ENCODE measurements at regions of chr3 and their contacts with region 1.

Region 1: DNA sequence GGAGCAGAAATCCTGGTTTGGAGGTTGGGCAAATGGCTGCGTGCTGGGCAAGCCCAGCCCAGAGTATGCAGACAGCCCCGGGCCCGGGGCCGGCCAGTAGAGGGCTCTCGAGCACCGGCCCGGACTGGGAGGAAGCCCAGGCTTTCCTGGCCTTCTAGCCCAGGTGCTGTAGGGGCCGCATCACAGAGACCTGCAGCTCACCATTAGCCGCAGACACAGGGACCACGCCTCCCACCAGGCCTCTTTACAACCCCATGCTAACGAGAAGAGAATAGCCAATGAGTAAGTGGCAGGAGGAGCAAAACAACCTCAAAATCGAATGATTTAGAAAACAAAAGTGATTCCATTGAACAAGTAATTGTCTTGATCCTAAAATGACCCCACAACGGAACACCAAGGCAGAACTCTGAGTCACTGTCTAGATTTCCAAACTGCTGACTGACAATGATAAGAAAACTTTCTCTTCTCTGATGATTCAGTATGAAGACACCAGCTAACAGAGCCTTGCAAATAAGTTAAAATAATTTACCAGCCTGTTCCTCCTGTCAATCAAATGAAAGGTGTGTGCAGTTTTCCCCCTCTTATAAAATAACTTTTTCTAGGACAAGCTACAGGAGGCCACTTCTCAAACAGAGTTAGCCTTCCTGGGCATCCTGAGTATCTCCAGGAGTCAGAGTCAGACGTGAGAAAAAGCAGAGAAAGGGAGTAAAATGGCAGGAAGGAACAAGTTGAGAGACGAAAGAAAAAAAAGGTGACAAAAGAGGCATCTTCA is 102.2 kb downstream of the DGKG start:
- DNase-seq: peak; percentile 77 to 87
- ATAC-seq: peak; percentile 88
- H3K4me3 ChIP-seq: no peak overlapping the region
- H3K27ac ChIP-seq: no peak overlapping the region
- H3K4me1 ChIP-seq: no peaks in the 10 kb centered on the region
- H3K27me3 ChIP-seq: no peaks in the 10 kb centered on the region

Region 2: GRCh38 chr3:184822654-184823053 is 1437.1 kb before region 1 on chr3:
- intact Hi-C with region 1: no loop called
- DNase-seq: no peak
- ATAC-seq: no peak
- H3K4me3 ChIP-seq: no peak overlapping the region
- H3K27ac ChIP-seq: no peak overlapping the region
- H3K4me1 ChIP-seq: peaks cover 0 to 2% of the 10 kb centered on the region in 2 donors
- H3K27me3 ChIP-seq: no peaks in the 10 kb centered on the region

Region 3: GRCh38 chr3:186540221-186540834 is 280.5 kb after region 1 on chr3:
- intact Hi-C with region 1: loop called (anchors 2 kb)
- DNase-seq: peak in 1 of 2 donors; percentile 72
- ATAC-seq: peak; percentile 83
- H3K4me3 ChIP-seq: no peak overlapping the region
- H3K27ac ChIP-seq: no peak overlapping the region
- H3K4me1 ChIP-seq: no peaks in the 10 kb centered on the region
- H3K27me3 ChIP-seq: no peaks in the 10 kb centered on the region